Heart left ventricle (tissue), 16 donors: ENCODE measurements at regions of chr11 and their contacts with region 1.

Region 1: GRCh38 chr11:18721561-18722292 is 4.3 kb downstream of the IGSF22 start:
- DNase-seq: no peak
- ATAC-seq: peak; percentile 60 to 80 (median 68)
- H3K4me3 ChIP-seq: peak overlapping the region; percentile 40 to 89 (median 65)
- H3K27ac ChIP-seq: peak overlapping the region in 10 of 12 donors; percentile 10 to 79 (median 60)
- H3K4me1 ChIP-seq: peaks cover 0 to 22% (median 8%) of the 10 kb centered on the region in 12 donors
- H3K27me3 ChIP-seq: no peaks in the 10 kb centered on the region
- CTCF ChIP-seq: peak; percentile 52 to 86 (median 73)
- POLR2A ChIP-seq: no peak

Region 2: DNA sequence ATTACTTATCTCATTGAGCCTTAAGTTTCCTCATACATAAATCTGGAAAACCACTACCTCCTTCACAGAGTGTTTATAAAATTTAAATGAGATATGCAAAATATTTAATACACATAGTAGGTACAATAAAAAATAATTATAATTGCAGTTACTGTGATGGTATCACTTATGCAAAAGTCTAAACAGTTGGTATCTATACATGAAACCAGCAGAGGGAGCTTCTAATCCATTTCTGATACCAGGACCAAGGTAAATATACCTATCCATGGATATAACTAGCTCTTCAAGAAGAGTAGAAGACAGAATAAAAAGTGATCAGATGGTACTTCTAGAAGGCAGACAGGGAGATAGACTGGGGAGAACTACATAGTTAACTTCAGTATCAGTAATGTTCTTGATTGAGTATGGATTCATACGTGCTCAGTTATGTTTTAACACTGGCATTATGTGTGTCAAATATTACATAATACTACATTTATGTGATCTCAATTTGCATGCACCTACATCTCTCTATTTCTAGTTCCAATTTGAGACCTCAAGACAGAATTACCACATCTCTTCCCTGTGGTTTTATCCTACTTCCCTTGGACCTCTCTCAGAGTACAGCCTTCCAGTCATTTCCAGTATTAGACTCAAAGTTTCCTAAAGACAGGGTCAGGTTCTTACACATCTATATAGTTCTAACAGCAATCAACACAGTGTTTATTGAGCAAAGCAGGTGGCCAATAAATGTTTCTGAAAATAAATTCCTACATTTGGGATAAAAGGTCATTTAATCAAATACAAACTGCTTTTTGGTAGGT is 181.3 kb before region 1 on chr11:
- intact Hi-C with region 1: loop called in 3 of 10 experiments (anchors 10 kb)
- DNase-seq: no peak
- ATAC-seq: no peak
- H3K4me3 ChIP-seq: no peak overlapping the region
- H3K27ac ChIP-seq: no peak overlapping the region
- H3K4me1 ChIP-seq: no peaks in the 10 kb centered on the region
- H3K27me3 ChIP-seq: no peaks in the 10 kb centered on the region
- CTCF ChIP-seq: peak in 11 of 12 donors; percentile 14 to 46 (median 38)
- POLR2A ChIP-seq: no peak

Region 3: DNA sequence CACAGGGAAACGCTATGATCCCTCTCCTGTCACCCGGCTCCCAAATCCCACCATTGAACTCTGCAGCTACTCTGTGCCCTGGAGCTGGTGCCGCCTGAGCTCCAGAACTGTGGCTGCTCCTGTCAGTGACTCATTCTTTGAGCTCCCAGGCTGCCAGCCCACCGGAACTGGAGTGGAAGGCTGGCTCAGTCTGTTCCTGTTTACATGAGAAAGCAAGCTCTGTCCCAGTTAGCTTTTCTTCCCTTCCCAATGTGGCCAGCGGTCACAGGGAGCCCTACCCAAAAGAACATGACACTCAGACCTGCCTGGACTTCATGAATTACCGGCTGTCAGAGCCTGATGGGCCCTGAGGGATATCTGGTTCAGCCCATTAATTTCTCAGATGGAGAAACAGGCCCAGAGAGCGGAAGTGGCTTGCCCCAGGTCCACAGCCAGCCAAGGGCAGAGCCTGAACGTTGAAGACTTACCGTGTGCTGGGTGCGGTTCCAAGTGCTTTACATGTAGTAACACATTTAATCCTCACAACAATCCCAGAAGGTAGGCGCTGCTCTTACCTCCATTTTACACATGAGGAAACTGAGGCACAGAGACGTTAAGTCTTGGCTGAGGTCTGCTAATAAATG is 28.1 kb after region 1 on chr11:
- intact Hi-C with region 1: no loop called
- DNase-seq: no peak
- ATAC-seq: peak in 3 of 4 donors; percentile 24 to 69 (median 43)
- H3K4me3 ChIP-seq: no peak overlapping the region
- H3K27ac ChIP-seq: no peak overlapping the region
- H3K4me1 ChIP-seq: peaks cover 0 to 3% (median 0%) of the 10 kb centered on the region in 12 donors
- H3K27me3 ChIP-seq: no peaks in the 10 kb centered on the region
- CTCF ChIP-seq: no peak
- POLR2A ChIP-seq: no peak